ENCODE measurements at regions of chr10 and their contacts with region 1.

Region 1: DNA sequence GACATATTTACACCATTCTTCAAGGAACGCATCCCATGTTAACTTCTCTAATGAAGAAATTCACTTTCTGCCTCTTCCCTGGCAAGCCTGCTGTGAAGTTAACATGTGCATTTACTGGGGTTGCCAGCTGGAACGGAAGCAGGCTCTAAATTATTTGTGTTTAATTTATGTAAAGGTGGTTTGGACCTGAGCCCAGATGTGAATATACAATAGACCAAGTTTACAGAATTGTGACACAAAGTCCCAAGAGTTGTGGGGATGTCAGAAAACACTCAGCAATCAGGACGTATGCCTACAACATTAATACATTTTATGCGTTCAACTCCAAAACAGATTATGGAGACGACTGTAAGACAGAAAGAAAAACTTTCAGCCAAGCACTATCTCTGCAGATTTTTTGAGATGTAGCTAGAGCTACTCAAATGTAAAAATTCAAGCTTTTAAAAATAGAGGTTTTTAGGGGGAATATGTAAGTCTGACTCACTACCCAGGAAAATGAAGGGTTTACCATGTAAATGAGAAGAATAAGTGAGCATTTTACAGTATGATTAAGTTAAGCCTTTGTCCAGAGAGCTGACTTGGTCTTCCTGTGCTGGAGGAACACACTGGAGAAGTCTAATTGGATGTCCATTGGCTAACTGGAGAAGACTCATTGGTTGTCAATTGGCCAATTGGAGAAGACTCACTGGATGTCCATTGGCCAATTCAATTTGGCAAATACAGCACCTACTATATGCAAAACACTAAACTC is 19.5 kb downstream of the NRP1 start:
- DNase-seq: no peak
- H3K4me3 ChIP-seq: no peak overlapping the region
- H3K27ac ChIP-seq: no peak overlapping the region
- H3K4me1 ChIP-seq: no peaks in the 10 kb centered on the region; a peak in 1 of 7 replicates
- H3K27me3 ChIP-seq: no peaks in the 10 kb centered on the region
- CTCF ChIP-seq: no peak
- EP300 ChIP-seq: no peak
- POLR2A ChIP-seq: no peak
- RAD21 ChIP-seq: no peak

Region 2: GRCh38 chr10:33248638-33249037 is 66.3 kb before region 1 on chr10:
- CTCF ChIA-PET with region 1: no interaction called
- POLR2A ChIA-PET with region 1: no interaction called
- DNase-seq: no peak
- H3K4me3 ChIP-seq: no peak overlapping the region
- H3K27ac ChIP-seq: no peak overlapping the region
- H3K4me1 ChIP-seq: no peaks in the 10 kb centered on the region
- H3K27me3 ChIP-seq: no peaks in the 10 kb centered on the region
- CTCF ChIP-seq: no peak
- EP300 ChIP-seq: no peak
- POLR2A ChIP-seq: no peak
- RAD21 ChIP-seq: no peak

Region 3: GRCh38 chr10:33327737-33328136 is 12.8 kb after region 1 on chr10:
- CTCF ChIA-PET with region 1: interaction called, 10 read pairs
- POLR2A ChIA-PET with region 1: no interaction called
- DNase-seq: no peak
- H3K4me3 ChIP-seq: no peak overlapping the region
- H3K27ac ChIP-seq: no peak overlapping the region
- H3K4me1 ChIP-seq: no peaks in the 10 kb centered on the region
- H3K27me3 ChIP-seq: peaks cover 0 to 3% (median 1%) of the 10 kb centered on the region in 4 experiments; a peak in 3 of 7 replicates
- CTCF ChIP-seq: peak in 2 of 3 experiments; percentile 36 to 49; a peak in 2 of 4 replicates
- EP300 ChIP-seq: no peak
- POLR2A ChIP-seq: no peak
- RAD21 ChIP-seq: peak; percentile 60 to 69; a peak in 3 of 4 replicates

Region 4: GRCh38 chr10:33365871-33366411 is 51.0 kb after region 1 on chr10:
- CTCF ChIA-PET with region 1: no interaction called
- POLR2A ChIA-PET with region 1: no interaction called
- DNase-seq: no peak
- H3K4me3 ChIP-seq: no peak overlapping the region
- H3K27ac ChIP-seq: no peak overlapping the region
- H3K4me1 ChIP-seq: no peaks in the 10 kb centered on the region
- H3K27me3 ChIP-seq: no peaks in the 10 kb centered on the region
- CTCF ChIP-seq: no peak
- EP300 ChIP-seq: no peak
- POLR2A ChIP-seq: no peak
- RAD21 ChIP-seq: no peak

Region 5: DNA sequence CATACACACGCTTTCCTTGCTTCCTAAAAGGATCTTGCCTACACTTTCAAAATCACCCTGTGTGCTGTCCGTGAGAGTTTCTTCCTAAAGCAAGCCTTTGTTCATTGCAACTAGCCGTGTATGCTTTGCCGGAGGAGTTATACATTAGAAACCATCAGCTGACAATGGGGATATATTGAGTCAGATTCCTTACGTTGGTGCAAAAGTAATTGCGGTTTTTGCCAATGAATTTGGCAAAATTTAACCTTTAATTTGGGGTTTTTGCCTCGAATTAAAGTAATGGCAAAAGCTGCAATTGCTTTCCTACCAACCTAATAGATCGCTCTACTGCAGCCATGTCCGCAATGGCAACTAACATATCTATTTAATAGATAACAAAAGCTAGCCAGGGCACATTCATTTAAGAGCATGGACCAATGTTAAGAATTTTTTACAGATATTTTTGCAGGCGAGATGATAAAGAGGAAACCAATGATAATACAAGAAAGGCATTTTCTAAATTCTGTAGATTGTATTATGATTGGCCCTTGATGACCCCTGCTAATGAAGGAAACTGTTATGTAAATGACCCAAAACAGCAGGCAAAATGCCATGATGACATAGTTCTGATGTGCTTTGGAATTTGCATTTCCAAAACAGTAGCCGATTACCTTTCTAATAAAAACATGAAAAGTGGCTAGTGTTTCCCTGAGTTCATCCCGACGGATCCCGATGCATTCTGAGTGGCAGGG is 204.3 kb after region 1 on chr10:
- CTCF ChIA-PET with region 1: no interaction called
- POLR2A ChIA-PET with region 1: no interaction called
- DNase-seq: no peak
- H3K4me3 ChIP-seq: peak overlapping the region in 1 of 4 experiments; percentile 37; a peak in 2 of 8 replicates
- H3K27ac ChIP-seq: no peak overlapping the region
- H3K4me1 ChIP-seq: peaks cover 0 to 15% (median 7%) of the 10 kb centered on the region in 4 experiments; a peak in 3 of 7 replicates
- H3K27me3 ChIP-seq: no peaks in the 10 kb centered on the region; a peak in 1 of 7 replicates
- CTCF ChIP-seq: no peak
- EP300 ChIP-seq: no peak; a peak in 1 of 3 replicates
- POLR2A ChIP-seq: no peak
- RAD21 ChIP-seq: no peak

Measured in H1 (cell line).